ENCODE measurements at regions of chr6 and their contacts with region 1.

Region 1: GRCh38 chr6:32413427-32414047 is 6.6 kb upstream of the BTNL2 start:
- DNase-seq: peak; percentile 75 to 78 (median 76)
- ATAC-seq: peak; percentile 67
- H3K4me3 ChIP-seq: no peak overlapping the region
- H3K27ac ChIP-seq: no peak overlapping the region
- H3K4me1 ChIP-seq: no peaks in the 10 kb centered on the region
- H3K27me3 ChIP-seq: peaks cover 0 to 11% of the 10 kb centered on the region in 2 donors
- CTCF ChIP-seq: peak; percentile 77 to 97 (median 90)
- POLR2A ChIP-seq: no peak

Region 2: DNA sequence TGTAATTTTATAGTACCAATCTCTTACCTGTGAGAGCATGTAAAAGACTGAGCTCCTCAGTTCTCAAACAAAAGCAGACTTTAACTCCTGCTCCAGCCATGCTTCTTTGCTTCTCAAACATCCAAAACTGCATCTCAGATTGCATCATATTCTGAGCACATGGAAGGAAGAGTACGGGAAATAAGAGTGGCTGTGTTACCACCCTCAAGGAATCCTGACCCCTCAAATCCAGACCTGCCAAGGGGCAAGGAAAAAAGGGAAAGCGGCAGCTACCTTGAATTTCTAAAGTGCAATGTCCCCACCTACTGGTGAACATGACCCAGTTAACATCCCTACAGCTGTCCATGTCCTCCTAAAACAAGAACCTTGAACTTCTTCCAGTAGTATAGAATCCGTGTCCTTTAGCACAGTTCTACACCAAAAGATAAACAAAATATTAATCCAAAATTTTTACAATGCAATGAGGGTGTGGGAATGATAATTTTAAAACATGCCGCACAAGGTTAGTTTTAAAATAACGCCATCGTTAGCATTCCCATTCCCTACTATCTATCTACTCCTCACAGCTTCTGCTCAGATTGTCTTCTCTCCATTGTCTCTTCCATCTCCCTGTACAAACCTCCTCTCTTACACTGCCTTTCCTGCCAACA is 287.0 kb after region 1 on chr6:
- intact Hi-C with region 1: loop called (anchors 5 kb)
- DNase-seq: peak; percentile 22 to 54 (median 39)
- ATAC-seq: peak; percentile 45
- H3K4me3 ChIP-seq: no peak overlapping the region
- H3K27ac ChIP-seq: no peak overlapping the region
- H3K4me1 ChIP-seq: no peaks in the 10 kb centered on the region
- H3K27me3 ChIP-seq: peaks cover 0 to 5% of the 10 kb centered on the region in 2 donors
- CTCF ChIP-seq: peak in 6 of 7 experiments; percentile 49 to 75 (median 62)
- POLR2A ChIP-seq: no peak

Region 3: GRCh38 chr6:32794510-32794909 is 381.0 kb after region 1 on chr6:
- intact Hi-C with region 1: loop called (anchors 5 kb)
- DNase-seq: peak in 1 of 4 donors; percentile 31
- ATAC-seq: no peak
- H3K4me3 ChIP-seq: no peak overlapping the region
- H3K27ac ChIP-seq: no peak overlapping the region
- H3K4me1 ChIP-seq: peaks cover 7% of the 10 kb centered on the region
- H3K27me3 ChIP-seq: no peaks in the 10 kb centered on the region
- CTCF ChIP-seq: no peak
- POLR2A ChIP-seq: no peak

Measured in body of pancreas (tissue), 4 donors.